Caco-2 (cell line): ENCODE measurements at regions of chr7 and their contacts with region 1.

Region 1: DNA sequence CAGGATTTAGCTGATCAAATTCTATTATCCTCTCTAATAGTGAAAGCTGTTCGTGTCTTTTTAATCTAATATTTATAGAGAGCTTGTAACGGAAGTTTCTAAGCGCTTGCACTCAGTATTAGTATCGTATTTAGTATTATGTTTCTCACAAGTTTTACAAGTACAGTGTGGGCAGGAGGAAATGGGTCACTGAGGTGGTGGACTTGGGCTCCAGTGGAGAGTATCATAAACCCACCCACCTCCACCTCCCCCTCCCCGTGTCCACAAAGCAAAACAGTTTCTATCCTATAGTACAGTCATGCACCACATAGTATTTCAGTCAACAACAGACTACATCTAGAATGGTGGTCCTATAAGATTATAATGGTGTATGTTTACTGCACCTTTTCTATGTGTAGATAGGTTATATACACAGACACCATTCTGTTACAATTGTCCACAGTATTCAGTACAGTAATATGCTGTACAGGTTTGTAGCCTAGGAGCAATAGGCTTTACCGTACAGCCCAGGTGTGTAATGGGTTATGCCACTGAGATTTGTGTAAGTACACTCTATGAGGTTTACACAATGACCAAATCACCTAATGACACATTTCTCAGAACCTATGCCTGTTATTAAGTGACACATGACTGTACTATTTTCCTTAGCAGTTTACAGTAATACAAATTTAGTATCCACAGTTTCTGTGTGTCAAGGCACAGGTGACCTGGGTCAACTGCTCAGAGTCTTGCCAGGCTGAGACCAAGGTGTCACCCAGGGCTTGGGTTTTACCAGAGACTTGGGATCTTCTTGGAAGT is 1021.3 kb upstream of the C7orf33 start:
- DNase-seq: no peak
- H3K4me3 ChIP-seq: no peak overlapping the region
- H3K4me3 Mint-ChIP-seq: no peak overlapping the region
- H3K27ac Mint-ChIP-seq: no peak overlapping the region
- H3K4me1 ChIP-seq: no peaks in the 10 kb centered on the region
- H3K4me1 Mint-ChIP-seq: no peaks in the 10 kb centered on the region
- H3K27me3 ChIP-seq: no peaks in the 10 kb centered on the region
- H3K27me3 Mint-ChIP-seq: no peaks in the 10 kb centered on the region
- CTCF ChIP-seq: no peak

Region 2: GRCh38 chr7:147721962-147722830 is 152.9 kb after region 1 on chr7:
- CTCF ChIA-PET with region 1: no interaction called
- POLR2A ChIA-PET with region 1: no interaction called
- intact Hi-C with region 1: loop called (anchors 10 kb)
- DNase-seq: no peak
- H3K4me3 ChIP-seq: no peak overlapping the region
- H3K4me3 Mint-ChIP-seq: no peak overlapping the region
- H3K27ac Mint-ChIP-seq: no peak overlapping the region
- H3K4me1 ChIP-seq: no peaks in the 10 kb centered on the region
- H3K4me1 Mint-ChIP-seq: no peaks in the 10 kb centered on the region
- H3K27me3 ChIP-seq: no peaks in the 10 kb centered on the region
- H3K27me3 Mint-ChIP-seq: no peaks in the 10 kb centered on the region
- CTCF ChIP-seq: no peak